ENCODE measurements at regions of chr2 and their contacts with region 1.

Region 1: GRCh38 chr2:75654012-75654411 is 7.4 kb downstream of the MRPL19 start:
- DNase-seq: no peak
- ATAC-seq: no peak
- H3K4me3 ChIP-seq: no peak overlapping the region
- H3K27ac ChIP-seq: no peak overlapping the region
- H3K4me1 ChIP-seq: peaks cover 8% of the 10 kb centered on the region
- H3K27me3 ChIP-seq: no peaks in the 10 kb centered on the region
- CTCF ChIP-seq: no peak

Region 2: DNA sequence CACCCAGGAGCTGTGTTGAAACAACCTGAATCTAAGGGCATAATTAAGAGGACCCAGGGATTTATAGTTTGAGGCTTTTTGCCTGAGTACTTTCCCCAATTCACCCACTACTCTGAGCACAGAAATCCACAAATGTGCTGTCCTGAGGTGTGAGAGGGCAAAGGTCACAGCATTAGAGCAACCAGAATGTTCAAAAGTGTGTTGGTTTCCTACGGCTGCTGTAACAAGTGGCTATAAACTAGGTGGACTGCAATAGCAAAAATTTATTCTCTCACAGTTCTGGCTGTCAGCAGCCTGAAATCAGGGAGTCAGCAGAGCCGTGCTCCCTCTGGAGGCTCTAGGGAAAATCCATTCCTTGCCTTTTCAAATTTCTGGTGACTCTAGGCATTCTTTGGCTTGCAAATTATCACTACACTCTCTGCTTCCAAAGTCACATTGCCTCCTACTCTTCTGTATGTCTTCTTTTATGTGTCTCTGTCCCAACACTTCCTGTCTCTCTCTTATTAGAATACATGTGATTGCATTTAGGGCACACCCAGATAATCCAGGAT is 363.3 kb before region 1 on chr2:
- intact Hi-C with region 1: no loop called
- DNase-seq: no peak
- ATAC-seq: no peak
- H3K4me3 ChIP-seq: no peak overlapping the region
- H3K27ac ChIP-seq: no peak overlapping the region
- H3K4me1 ChIP-seq: no peaks in the 10 kb centered on the region
- H3K27me3 ChIP-seq: no peaks in the 10 kb centered on the region
- CTCF ChIP-seq: peak; percentile 8

Region 3: GRCh38 chr2:75570948-75571729 is 82.9 kb before region 1 on chr2:
- intact Hi-C with region 1: no loop called
- DNase-seq: no peak
- ATAC-seq: peak in 1 of 4 donors; percentile 21
- H3K4me3 ChIP-seq: no peak overlapping the region
- H3K27ac ChIP-seq: no peak overlapping the region
- H3K4me1 ChIP-seq: no peaks in the 10 kb centered on the region
- H3K27me3 ChIP-seq: peaks cover 0 to 4% (median 2%) of the 10 kb centered on the region in 3 donors
- CTCF ChIP-seq: no peak

Region 4: DNA sequence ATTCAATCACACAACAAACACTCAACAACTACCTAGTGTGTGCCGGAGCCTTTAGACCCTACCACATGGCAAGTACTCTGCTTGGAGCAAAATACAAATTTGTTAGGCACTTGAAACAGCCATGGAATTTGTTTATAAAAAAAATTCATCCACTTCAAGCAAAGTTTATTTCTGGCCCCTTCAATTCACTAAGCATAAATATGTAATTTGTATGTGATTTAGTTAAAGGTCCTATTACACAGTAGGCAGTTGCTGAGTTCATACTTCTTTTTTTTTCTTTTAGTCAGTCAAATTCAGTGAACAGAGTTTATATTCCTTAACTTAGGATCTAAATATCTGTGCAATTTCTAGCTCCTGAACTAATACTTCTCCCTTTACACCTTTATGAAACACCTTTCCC is 34.2 kb after region 1 on chr2:
- intact Hi-C with region 1: loop called in 1 of 2 experiments (anchors 5 kb)
- DNase-seq: no peak
- ATAC-seq: no peak
- H3K4me3 ChIP-seq: no peak overlapping the region
- H3K27ac ChIP-seq: no peak overlapping the region
- H3K4me1 ChIP-seq: no peaks in the 10 kb centered on the region
- H3K27me3 ChIP-seq: no peaks in the 10 kb centered on the region
- CTCF ChIP-seq: no peak

Region 5: DNA sequence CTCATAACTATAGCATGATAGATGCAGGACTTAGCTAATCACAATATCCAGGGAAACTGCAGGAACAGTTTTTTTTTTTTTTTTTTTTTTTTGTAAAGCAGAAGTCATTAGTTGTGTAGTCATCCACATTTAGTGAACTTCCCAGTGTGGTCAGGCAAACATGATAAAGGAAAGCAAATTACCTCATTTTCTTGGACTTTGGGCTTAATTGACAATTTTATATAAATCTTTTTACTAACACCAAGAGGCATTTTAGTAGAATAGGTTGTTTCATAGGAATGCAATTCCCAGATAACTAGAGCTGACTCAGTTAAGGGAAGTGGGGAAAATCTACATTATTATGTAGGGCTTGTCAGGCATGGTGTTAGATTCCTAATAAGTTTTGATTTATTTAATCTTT is 199.4 kb after region 1 on chr2:
- intact Hi-C with region 1: no loop called
- DNase-seq: no peak
- ATAC-seq: no peak
- H3K4me3 ChIP-seq: no peak overlapping the region
- H3K27ac ChIP-seq: no peak overlapping the region
- H3K4me1 ChIP-seq: no peaks in the 10 kb centered on the region
- H3K27me3 ChIP-seq: no peaks in the 10 kb centered on the region
- CTCF ChIP-seq: no peak

Region 6: GRCh38 chr2:76268928-76269610 is 615.1 kb after region 1 on chr2:
- intact Hi-C with region 1: no loop called
- DNase-seq: no peak
- ATAC-seq: no peak
- H3K4me3 ChIP-seq: no peak overlapping the region
- H3K27ac ChIP-seq: no peak overlapping the region
- H3K4me1 ChIP-seq: no peaks in the 10 kb centered on the region
- H3K27me3 ChIP-seq: no peaks in the 10 kb centered on the region
- CTCF ChIP-seq: no peak

Measured in psoas muscle (tissue), 8 donors.